GM23248 (cell line): ENCODE measurements at regions of chr3 and their contacts with region 1.

Region 1: DNA sequence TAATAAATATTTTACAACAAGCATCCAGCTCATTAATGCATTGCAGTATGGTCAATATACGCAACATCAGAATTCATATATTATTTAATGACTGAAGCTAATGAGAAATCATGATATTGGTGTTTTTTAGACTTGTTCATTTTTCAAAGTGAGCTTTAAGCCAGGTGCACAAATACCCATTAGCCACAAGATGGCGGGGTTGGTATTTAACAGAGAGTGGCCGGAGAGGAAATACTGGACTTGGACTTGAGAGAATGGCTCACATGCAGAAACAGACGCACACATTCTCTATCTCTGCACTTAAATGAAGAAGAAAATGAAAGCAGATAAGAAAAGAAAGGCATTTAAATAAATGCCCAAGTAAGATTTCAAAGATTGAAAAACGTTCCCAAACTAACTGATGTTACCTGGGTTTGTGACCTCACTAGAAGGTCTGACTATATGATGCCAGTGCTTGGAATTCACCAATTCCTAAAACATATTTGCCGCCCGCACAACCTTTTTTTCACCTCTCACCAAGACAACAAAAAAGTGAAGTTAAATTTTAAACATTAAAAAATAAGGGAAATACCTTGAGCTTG is 21.2 kb upstream of the CRBN start:
- DNase-seq: peak; percentile 82
- H3K4me3 ChIP-seq: no peak overlapping the region
- H3K27ac ChIP-seq: no peak overlapping the region
- H3K4me1 ChIP-seq: no peaks in the 10 kb centered on the region
- H3K27me3 ChIP-seq: no peaks in the 10 kb centered on the region

Region 2: DNA sequence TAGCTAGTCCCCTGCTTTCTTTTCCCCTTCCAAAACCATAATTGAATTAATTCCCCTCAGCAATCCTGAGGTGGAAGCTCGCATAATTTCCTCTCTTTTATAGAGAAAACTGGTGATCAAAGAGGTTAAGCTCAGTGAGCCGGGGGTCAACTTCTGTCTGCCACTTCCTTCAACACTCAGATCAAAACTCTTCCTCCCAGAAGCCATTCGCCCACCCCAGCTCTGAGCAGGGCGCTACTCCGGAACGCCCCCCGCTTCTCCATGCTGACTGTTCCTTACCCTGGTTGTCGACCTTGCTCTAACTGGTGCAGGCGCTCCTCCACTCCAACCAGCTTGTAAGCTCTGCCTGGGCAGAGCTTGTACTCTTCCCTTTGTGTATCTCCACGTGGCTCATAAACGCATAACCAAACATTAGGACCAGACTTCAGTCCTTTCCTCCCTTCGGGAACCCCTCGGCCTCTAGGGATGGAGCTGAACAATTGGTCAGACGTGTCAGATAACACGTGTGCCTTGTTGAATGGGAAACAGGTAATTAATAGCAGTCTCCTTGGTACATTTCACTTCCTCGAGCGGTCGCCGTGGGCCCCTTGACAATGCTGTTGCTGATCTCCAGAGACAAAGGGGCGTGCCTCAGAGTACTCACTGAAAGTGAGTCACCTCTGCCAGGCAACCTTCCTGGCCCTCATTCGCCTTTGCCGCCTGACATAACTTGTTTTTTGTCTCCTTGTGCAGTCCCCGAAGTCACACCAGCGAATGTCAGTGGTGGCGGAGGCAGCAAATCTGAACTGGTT is 162.3 kb before region 1 on chr3:
- in situ Hi-C with region 1: no loop called
- DNase-seq: no peak
- H3K4me3 ChIP-seq: no peak overlapping the region
- H3K27ac ChIP-seq: no peak overlapping the region
- H3K4me1 ChIP-seq: no peaks in the 10 kb centered on the region
- H3K27me3 ChIP-seq: no peaks in the 10 kb centered on the region

Region 3: GRCh38 chr3:4271834-4272233 is 1071.1 kb after region 1 on chr3:
- in situ Hi-C with region 1: loop called (anchors 10 kb)
- DNase-seq: peak; percentile 60
- H3K4me3 ChIP-seq: no peak overlapping the region
- H3K27ac ChIP-seq: no peak overlapping the region
- H3K4me1 ChIP-seq: no peaks in the 10 kb centered on the region
- H3K27me3 ChIP-seq: no peaks in the 10 kb centered on the region